ENCODE measurements at regions of chr6 and their contacts with region 1.

Region 1: DNA sequence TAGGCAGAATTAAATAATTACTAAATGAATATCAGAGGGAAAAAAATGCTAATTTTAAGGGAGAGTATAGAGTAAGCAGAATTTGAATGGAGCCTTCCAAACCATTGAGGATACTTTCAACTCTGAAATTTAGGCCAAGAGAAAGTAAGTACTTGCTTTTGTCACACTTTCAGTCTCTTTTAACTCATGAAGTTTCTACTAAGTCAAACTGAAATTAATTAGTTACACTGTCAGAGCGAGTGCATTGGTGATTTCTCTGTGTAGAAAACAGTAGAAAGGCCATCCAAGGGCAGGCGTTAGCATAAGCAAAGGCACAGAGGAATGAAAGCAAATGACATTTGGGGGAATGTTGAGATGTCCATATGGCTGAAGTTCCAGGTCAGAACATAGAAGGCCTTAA is 92.9 kb downstream of the PLEKHG1 start:
- DNase-seq: no peak
- ATAC-seq: no peak
- H3K4me3 ChIP-seq: no peak overlapping the region
- H3K27ac ChIP-seq: no peak overlapping the region
- H3K4me1 ChIP-seq: peaks cover 0 to 79% (median 26%) of the 10 kb centered on the region in 12 donors
- H3K27me3 ChIP-seq: no peaks in the 10 kb centered on the region
- CTCF ChIP-seq: no peak
- POLR2A ChIP-seq: no peak

Region 2: DNA sequence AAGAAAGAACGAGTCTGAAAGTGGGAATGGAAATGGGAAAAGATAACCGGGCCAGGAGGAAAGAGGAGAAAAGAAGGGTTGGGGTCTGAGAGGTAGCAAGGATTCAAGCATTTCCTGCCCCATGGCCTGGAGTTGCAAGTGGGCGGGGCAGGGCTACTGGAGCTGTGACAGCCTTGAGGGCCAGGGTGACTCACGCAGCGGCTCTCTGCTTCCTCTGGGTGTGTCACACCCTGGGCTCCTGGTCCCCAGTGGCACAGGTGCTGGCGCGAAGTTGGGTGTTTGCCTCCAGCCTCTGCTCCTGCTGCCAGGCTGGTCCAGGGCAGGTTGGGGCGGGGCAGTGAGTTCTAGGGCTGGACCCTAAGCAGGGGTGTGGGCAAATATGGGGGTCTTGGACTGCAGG is 620.4 kb before region 1 on chr6:
- intact Hi-C with region 1: no loop called
- DNase-seq: peak in 3 of 5 donors; percentile 42 to 71 (median 70)
- ATAC-seq: no peak
- H3K4me3 ChIP-seq: no peak overlapping the region
- H3K27ac ChIP-seq: no peak overlapping the region
- H3K4me1 ChIP-seq: peaks cover 0 to 13% (median 4%) of the 10 kb centered on the region in 12 donors
- H3K27me3 ChIP-seq: no peaks in the 10 kb centered on the region
- CTCF ChIP-seq: no peak
- POLR2A ChIP-seq: no peak

Region 3: GRCh38 chr6:150622941-150623874 is 69.4 kb before region 1 on chr6:
- intact Hi-C with region 1: no loop called
- DNase-seq: no peak
- ATAC-seq: peak in 3 of 4 donors; percentile 46 to 90 (median 50)
- H3K4me3 ChIP-seq: no peak overlapping the region
- H3K27ac ChIP-seq: peak overlapping the region in 7 of 12 donors; percentile 1 to 58 (median 17)
- H3K4me1 ChIP-seq: peaks cover 0 to 67% (median 36%) of the 10 kb centered on the region in 12 donors
- H3K27me3 ChIP-seq: no peaks in the 10 kb centered on the region
- CTCF ChIP-seq: no peak
- POLR2A ChIP-seq: no peak

Region 4: GRCh38 chr6:150652848-150653613 is 39.6 kb before region 1 on chr6:
- intact Hi-C with region 1: no loop called
- DNase-seq: no peak
- ATAC-seq: no peak
- H3K4me3 ChIP-seq: no peak overlapping the region
- H3K27ac ChIP-seq: no peak overlapping the region
- H3K4me1 ChIP-seq: peaks cover 0 to 12% (median 1%) of the 10 kb centered on the region in 12 donors
- H3K27me3 ChIP-seq: no peaks in the 10 kb centered on the region
- CTCF ChIP-seq: no peak
- POLR2A ChIP-seq: no peak

Region 5: GRCh38 chr6:150767571-150768018 is 75.0 kb after region 1 on chr6:
- intact Hi-C with region 1: loop called in 1 of 10 experiments (anchors 10 kb)
- DNase-seq: peak in 1 of 5 donors; percentile 22
- ATAC-seq: peak in 2 of 4 donors; percentile 41 to 57
- H3K4me3 ChIP-seq: peak overlapping the region in 3 of 12 donors; percentile 3 to 31 (median 24)
- H3K27ac ChIP-seq: peak overlapping the region; percentile 3 to 74 (median 42)
- H3K4me1 ChIP-seq: peaks cover 0 to 56% (median 25%) of the 10 kb centered on the region in 12 donors
- H3K27me3 ChIP-seq: no peaks in the 10 kb centered on the region
- CTCF ChIP-seq: no peak
- POLR2A ChIP-seq: no peak

Region 6: DNA sequence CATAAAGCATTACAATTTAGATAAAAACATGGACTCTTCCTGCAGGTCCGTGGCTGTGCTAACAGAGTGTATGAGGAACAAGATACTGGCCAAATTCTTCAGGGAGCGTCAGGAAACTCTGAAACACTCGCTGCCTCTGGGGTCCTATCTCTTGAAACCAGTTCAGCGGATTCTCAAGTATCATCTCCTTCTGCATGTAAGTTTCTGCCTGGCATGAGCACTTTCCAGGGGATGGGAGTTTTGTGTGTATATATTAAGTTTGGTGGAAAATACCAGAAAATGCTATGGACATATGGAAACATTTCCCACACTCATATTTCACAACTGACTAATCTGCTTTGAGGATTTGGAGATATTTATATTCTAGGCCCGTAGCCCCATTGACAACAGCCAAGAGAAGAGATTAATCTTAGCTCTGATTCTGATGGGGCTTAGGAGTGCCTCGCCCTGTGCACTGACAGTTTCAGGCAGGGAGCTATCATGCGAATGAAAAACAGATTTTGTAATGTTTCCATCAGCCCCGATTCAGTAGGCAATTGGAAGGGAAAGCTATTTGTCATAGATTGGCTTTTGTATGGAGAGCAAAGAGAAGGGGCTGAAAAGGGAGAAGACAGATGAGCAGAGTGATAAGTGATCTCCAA is 108.2 kb after region 1 on chr6:
- intact Hi-C with region 1: loop called in 1 of 10 experiments (anchors 10 kb)
- DNase-seq: no peak
- ATAC-seq: peak in 3 of 4 donors; percentile 20 to 35 (median 34)
- H3K4me3 ChIP-seq: no peak overlapping the region
- H3K27ac ChIP-seq: peak overlapping the region in 2 of 12 donors; percentile 12 to 17
- H3K4me1 ChIP-seq: peaks cover 0 to 4% (median 0%) of the 10 kb centered on the region in 12 donors
- H3K27me3 ChIP-seq: no peaks in the 10 kb centered on the region
- CTCF ChIP-seq: no peak
- POLR2A ChIP-seq: no peak

Region 7: GRCh38 chr6:150830439-150831165 is 138.0 kb after region 1 on chr6:
- intact Hi-C with region 1: no loop called
- DNase-seq: no peak
- ATAC-seq: peak in 1 of 4 donors; percentile 9
- H3K4me3 ChIP-seq: no peak overlapping the region
- H3K27ac ChIP-seq: no peak overlapping the region
- H3K4me1 ChIP-seq: no peaks in the 10 kb centered on the region
- H3K27me3 ChIP-seq: no peaks in the 10 kb centered on the region
- CTCF ChIP-seq: no peak
- POLR2A ChIP-seq: no peak